ENCODE measurements at regions of chr4 and their contacts with region 1.

Region 1: DNA sequence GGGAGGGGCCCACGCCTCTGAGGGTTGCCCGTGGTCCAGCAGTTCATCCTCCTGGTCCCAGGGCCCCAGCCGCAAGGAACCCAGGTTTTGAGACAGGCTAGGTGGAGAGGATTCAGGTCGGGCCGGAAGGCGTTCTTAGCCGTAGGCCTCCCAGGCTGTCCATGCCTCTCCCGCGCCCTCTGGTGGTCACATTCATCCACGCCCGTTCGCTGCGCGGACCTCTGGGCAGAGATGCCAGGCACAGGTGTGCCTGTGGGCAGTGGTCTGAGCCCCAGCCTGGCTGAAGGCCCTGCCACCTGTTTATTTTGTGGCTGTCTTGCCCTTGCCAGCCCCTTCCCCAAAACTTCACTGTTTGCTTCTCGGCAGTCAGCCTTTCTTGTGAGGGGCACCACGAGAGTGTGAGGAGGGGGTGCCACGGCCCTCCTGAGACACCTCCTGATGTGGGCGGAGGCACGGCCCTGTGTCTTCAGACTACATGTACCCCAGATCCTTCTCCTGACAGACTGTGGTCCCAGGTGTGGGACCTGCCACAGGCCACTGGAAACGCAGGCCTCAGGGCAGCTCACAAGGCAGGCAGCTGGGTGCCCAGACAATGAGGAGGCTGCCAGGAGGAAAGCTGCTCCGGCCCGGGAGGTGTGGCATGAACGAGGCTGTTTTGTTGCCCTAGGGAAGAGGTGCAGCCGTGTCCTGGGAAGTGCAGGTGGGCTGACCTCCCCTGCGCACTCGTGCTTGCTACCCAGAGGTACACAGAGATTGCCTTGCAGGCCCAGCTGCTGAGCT is 5.0 kb downstream of the UVSSA start:
- DNase-seq: peak; percentile 85 to 92
- ATAC-seq: peak; percentile 29 to 62 (median 56)
- H3K4me3 ChIP-seq: no peak overlapping the region
- H3K27ac ChIP-seq: no peak overlapping the region
- H3K4me1 ChIP-seq: peaks cover 11% of the 10 kb centered on the region
- H3K27me3 ChIP-seq: no peaks in the 10 kb centered on the region
- CTCF ChIP-seq: peak; percentile 93

Region 2: GRCh38 chr4:1130316-1131186 is 221.5 kb before region 1 on chr4:
- intact Hi-C with region 1: loop called (anchors 2 to 5 kb)
- DNase-seq: peak; percentile 69 to 78
- ATAC-seq: peak; percentile 94 to 97 (median 96)
- H3K4me3 ChIP-seq: no peak overlapping the region
- H3K27ac ChIP-seq: no peak overlapping the region
- H3K4me1 ChIP-seq: no peaks in the 10 kb centered on the region
- H3K27me3 ChIP-seq: no peaks in the 10 kb centered on the region
- CTCF ChIP-seq: peak; percentile 99

Region 3: DNA sequence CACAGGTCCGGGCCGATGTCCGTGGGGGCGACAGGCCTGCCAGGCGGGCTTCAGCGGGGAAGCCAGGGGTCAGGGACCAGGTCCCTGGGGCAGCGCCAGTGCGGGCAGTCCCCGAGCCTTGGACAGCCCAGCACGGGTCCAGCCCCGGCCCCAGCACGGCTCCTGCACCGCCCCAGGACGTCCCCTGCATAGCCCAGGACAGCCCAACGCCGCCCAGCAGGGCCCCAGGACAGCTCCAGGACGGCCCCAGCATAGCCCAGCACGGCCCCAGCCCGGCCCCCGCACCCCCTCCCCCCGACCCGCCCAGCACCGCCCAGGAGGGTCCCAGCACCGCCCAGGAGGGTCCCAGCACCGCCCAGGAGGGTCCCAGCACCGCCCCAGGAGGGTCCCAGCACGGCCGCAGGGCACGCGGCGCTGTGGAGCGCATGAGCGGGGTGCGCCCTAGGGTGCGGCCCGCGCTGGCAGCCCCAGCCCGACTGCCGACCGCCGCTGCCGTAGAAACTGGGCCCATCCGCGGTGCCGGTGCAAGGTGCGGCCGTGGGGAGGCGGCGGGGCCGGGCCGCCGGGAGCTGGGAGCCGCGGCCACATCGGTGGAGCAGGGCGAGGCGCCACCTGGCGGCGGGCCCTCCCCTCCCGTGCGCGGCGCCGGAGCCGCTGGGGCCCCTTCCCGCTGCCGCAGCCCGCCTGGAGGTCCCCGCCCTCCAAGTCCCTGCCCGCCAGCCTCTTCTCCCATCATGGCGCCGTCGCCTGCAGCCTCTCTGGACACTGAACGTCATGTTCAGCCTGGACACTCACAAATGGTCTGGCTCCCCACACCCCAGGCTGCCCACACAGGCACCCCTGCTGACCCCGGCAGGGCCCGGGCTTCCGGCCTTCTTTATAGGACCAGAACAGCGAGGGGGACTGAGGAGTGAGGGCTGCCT is 161.0 kb after region 1 on chr4:
- intact Hi-C with region 1: loop called (anchors 5 to 10 kb)
- DNase-seq: peak; percentile 42 to 62
- ATAC-seq: peak; percentile 55 to 73 (median 70)
- H3K4me3 ChIP-seq: no peak overlapping the region
- H3K27ac ChIP-seq: no peak overlapping the region
- H3K4me1 ChIP-seq: no peaks in the 10 kb centered on the region
- H3K27me3 ChIP-seq: peaks cover 0 to 58% (median 13%) of the 10 kb centered on the region in 3 donors
- CTCF ChIP-seq: peak; percentile 55

Region 4: DNA sequence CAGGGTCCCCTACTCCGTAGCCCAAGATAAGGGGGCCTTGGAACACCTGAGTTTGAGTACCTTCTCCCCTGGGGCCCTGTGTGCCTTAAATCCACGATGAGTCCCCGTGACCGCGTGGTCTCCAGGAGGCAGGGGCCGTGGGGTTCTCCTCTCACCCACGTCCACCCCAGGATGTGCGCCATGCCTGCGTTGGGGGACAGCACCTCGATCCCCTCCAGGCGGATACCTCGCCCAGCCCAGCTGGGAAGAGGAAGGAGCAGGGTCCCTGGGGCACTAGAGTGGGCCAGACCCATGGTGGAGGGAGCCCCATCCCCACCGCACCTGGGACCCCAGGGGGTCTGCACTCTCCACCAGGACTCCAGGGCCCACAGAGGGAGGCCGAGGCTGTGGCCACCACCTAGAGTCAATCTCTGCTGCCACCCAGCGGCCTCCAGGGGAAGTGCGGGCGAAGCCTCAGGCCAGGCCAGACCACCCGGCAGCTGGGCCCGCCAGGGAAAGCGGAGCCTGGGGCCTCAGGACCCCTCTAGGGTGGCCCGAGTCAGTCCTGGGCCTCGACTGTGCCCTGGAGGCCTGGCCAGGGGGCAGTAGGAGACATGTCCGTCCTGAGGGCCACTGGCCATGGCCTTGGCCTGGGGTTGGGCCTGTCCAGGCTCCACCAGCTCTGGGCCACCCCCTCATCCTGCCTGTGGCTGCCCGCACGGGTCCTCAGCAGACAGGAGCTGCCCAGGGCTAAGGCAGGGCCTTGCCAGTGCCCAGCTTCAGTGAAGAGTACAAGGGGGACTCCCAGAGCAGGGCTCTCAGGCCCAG is 277.1 kb after region 1 on chr4:
- intact Hi-C with region 1: loop called (anchors 2 to 5 kb)
- DNase-seq: peak; percentile 61 to 84
- ATAC-seq: peak; percentile 77 to 87 (median 84)
- H3K4me3 ChIP-seq: no peak overlapping the region
- H3K27ac ChIP-seq: no peak overlapping the region
- H3K4me1 ChIP-seq: no peaks in the 10 kb centered on the region
- H3K27me3 ChIP-seq: no peaks in the 10 kb centered on the region
- CTCF ChIP-seq: peak; percentile 96

Region 5: DNA sequence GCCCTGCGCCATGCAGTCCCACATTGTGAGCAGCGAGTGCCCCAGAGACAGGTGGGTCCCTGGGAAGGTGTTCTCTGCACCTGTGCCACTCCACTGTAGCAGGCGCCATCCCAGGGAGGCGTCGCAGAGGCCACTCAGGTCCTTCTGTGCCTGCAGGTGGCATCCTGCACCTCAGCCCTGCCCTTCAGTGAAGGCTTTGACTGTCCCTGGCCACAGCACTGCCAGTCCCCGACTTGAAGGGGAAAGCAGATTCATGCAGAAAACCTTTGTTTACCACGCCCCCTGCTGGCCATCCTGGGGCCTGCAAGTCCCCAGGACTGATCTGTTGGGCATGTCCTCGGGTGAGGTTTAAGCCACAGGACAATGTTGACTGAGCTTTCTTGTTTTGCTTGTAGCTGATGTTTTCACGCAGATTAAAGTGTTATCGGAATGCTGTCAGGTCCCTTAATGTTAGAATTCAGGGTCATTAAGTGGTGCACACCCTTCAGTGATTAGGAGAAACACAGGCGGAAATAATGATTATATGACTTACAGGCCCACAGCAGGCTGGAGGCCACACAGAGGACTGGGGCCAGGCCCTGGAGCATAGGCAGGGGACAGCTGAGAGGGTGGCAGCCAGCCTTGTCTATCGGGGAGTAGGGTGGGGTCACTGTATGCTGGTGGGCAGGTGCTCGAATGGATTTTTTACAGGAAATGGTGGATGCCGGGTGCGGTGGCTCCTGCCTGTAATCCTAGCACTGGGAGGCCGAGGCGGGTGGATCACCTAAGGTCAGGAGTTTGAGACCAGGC is 374.3 kb after region 1 on chr4:
- intact Hi-C with region 1: loop called in 1 of 2 experiments (anchors 2 kb)
- DNase-seq: peak; percentile 90 to 92
- ATAC-seq: peak; percentile 67 to 81 (median 77)
- H3K4me3 ChIP-seq: no peak overlapping the region
- H3K27ac ChIP-seq: peak overlapping the region; percentile 19
- H3K4me1 ChIP-seq: peaks cover 12% of the 10 kb centered on the region
- H3K27me3 ChIP-seq: no peaks in the 10 kb centered on the region
- CTCF ChIP-seq: peak; percentile 98